IMR-90 (cell line): ENCODE measurements at regions of chr20 and their contacts with region 1.

Region 1: GRCh38 chr20:40706977-40707582 is 18.0 kb upstream of the MAFB start:
- DNase-seq: no peak
- ATAC-seq: peak; percentile 29; the same call in 1 of the 2 replicates
- H3K4me3 ChIP-seq: no peak overlapping the region
- H3K27ac ChIP-seq: no peak overlapping the region
- H3K4me1 ChIP-seq: no peaks in the 10 kb centered on the region
- H3K27me3 ChIP-seq: no peaks in the 10 kb centered on the region; the same call in 1 of the 2 replicates
- CTCF ChIP-seq: no peak
- POLR2A ChIP-seq: no peak
- RAD21 ChIP-seq: no peak

Region 2: GRCh38 chr20:40583205-40583604 is 123.9 kb before region 1 on chr20:
- CTCF ChIA-PET with region 1: no interaction called
- POLR2A ChIA-PET with region 1: interaction called, 27 read pairs
- dilution Hi-C with region 1: no loop called
- in situ Hi-C with region 1: no loop called
- intact Hi-C with region 1: no loop called
- DNase-seq: no peak
- ATAC-seq: no peak
- H3K4me3 ChIP-seq: no peak overlapping the region
- H3K27ac ChIP-seq: no peak overlapping the region
- H3K4me1 ChIP-seq: no peaks in the 10 kb centered on the region
- H3K27me3 ChIP-seq: no peaks in the 10 kb centered on the region; the same call in 1 of the 2 replicates
- CTCF ChIP-seq: no peak
- POLR2A ChIP-seq: no peak
- RAD21 ChIP-seq: no peak